Right cardiac atrium (tissue), 5 donors: ENCODE measurements at regions of chr10 and their contacts with region 1.

Region 1: DNA sequence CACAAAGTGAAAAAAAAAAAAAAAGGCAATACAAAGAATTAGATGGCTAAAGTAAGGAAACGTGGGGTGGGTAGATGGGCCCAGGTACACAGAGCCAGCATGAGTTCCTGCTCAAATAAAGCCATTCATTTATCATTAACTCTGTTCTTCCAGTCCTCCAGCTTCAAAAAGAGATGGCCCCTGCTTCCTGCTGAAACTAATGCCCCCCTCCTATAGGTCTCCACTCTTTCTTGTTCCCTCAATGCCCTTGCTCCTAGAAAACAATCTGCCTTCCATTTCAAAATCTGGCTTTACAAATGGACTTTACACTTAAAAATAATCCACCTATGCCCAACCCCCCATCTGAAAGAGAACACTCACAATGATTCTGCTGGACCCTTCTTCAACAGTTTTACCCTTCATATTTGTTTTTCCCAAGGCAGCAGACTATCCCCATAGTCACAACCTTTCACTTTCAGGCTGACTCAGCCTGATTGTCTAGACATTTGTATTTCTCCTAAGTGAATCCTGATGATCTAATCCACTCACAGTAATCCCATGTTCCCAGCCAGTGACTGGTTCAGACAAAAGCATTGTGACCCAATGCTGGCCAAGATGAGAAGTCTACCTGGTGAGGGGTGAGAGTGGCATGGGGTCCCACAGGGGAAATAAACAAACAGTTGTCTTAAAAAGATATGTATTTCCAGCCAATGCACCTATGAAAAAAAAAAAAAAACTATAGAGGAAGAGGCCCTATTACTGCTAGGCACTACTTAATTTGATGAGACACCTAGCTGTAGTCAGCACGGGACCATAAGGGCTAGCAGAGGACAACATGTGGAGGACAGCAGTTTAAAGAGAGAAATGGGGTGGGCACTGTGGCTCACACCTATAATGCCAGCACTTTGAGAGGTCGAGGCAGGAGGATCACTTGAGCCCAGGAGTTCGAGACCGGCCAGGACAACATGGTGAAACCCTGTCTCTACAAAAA is 74.6 kb upstream of the GRID1 start:
- DNase-seq: no peak
- ATAC-seq: no peak
- H3K4me3 ChIP-seq: no peak overlapping the region
- H3K27ac ChIP-seq: no peak overlapping the region
- H3K4me1 ChIP-seq: peaks cover 2% of the 10 kb centered on the region
- H3K27me3 ChIP-seq: no peaks in the 10 kb centered on the region

Region 2: DNA sequence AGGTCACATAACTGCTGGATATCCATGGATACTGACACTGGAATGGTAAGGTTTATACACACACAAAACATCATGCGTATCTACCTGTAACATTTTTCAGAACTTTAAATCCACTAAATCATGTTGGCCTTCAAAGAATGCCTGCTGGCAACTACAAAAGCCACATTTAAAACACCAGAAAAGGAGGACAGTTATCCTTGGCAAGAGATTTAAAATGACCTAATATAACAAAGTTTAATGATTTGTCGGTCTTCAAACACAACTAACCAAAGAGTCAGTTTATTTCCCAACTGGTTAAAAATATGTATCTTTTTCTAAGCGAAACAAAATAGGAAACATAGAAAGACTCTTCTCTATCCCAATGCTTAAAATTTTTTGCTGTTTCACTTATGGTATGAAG is 56.5 kb after region 1 on chr10:
- intact Hi-C with region 1: loop called in 1 of 4 experiments (anchors 10 kb)
- DNase-seq: no peak
- ATAC-seq: no peak
- H3K4me3 ChIP-seq: no peak overlapping the region
- H3K27ac ChIP-seq: no peak overlapping the region
- H3K4me1 ChIP-seq: peaks cover 3% of the 10 kb centered on the region
- H3K27me3 ChIP-seq: no peaks in the 10 kb centered on the region